WTC11 (cell line): ENCODE measurements at regions of chr1 and their contacts with region 1.

Region 1: GRCh38 chr1:236451796-236452373 is 57.8 kb downstream of the EDARADD start:
- DNase-seq: peak; percentile 66
- ATAC-seq: peak; percentile 97
- H3K4me3 Mint-ChIP-seq: no peak overlapping the region
- H3K27ac Mint-ChIP-seq: no peak overlapping the region
- H3K4me1 Mint-ChIP-seq: 0 out of 2 replicates have a peak, but pooled peaks cover 7% of the 10 kb centered on the region
- H3K27me3 Mint-ChIP-seq: no peaks in the 10 kb centered on the region
- CTCF ChIP-seq: peak; percentile 66

Region 2: DNA sequence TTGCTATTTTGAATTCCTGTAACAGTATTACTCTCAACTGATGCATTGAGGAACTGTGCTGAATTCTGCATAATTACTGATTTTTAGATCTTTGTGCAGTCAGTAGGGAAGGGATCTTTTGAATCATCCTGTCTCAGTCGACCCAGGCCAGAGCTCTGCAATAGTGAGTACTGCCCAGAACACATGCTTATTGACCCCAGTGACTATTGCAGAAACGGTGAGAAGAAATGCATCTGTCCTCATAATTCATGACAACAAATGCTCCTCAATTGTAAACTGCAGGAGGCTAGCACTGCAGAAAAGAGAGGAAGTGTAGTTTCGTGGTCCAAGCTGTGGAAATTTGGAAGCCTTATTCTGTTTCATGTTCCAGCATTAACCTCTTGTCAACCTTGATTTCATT is 38.2 kb before region 1 on chr1:
- CTCF ChIA-PET with region 1: no interaction called
- POLR2A ChIA-PET with region 1: no interaction called
- DNase-seq: no peak
- ATAC-seq: no peak
- H3K4me3 Mint-ChIP-seq: no peak overlapping the region
- H3K27ac Mint-ChIP-seq: no peak overlapping the region
- H3K4me1 Mint-ChIP-seq: 0 out of 2 replicates have a peak, but pooled peaks cover 3% of the 10 kb centered on the region
- H3K27me3 Mint-ChIP-seq: no peaks in the 10 kb centered on the region
- CTCF ChIP-seq: no peak

Region 3: DNA sequence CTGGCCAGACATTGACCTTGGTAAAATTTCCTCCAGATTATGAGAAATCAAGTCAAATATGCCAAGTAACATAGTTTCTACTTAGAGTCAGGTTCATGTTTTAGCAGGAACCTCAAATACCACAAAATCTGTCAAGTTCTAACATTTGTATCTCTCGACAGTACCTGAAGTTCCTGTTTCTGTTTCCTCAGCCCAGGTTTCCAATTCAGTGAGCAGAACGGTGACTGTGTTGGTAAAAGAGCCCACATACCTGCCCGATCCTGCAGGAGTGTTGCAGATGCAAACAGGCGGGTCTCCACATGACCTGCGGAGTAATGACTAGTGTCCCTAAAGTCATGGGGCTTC is 14.0 kb after region 1 on chr1:
- CTCF ChIA-PET with region 1: interaction called, 12 read pairs
- POLR2A ChIA-PET with region 1: no interaction called
- DNase-seq: no peak
- ATAC-seq: no peak
- H3K4me3 Mint-ChIP-seq: no peak overlapping the region
- H3K27ac Mint-ChIP-seq: no peak overlapping the region
- H3K4me1 Mint-ChIP-seq: peaks cover 10% of the 10 kb centered on the region
- H3K27me3 Mint-ChIP-seq: no peaks in the 10 kb centered on the region
- CTCF ChIP-seq: no peak